ENCODE measurements at regions of chr5 and their contacts with region 1.

Region 1: DNA sequence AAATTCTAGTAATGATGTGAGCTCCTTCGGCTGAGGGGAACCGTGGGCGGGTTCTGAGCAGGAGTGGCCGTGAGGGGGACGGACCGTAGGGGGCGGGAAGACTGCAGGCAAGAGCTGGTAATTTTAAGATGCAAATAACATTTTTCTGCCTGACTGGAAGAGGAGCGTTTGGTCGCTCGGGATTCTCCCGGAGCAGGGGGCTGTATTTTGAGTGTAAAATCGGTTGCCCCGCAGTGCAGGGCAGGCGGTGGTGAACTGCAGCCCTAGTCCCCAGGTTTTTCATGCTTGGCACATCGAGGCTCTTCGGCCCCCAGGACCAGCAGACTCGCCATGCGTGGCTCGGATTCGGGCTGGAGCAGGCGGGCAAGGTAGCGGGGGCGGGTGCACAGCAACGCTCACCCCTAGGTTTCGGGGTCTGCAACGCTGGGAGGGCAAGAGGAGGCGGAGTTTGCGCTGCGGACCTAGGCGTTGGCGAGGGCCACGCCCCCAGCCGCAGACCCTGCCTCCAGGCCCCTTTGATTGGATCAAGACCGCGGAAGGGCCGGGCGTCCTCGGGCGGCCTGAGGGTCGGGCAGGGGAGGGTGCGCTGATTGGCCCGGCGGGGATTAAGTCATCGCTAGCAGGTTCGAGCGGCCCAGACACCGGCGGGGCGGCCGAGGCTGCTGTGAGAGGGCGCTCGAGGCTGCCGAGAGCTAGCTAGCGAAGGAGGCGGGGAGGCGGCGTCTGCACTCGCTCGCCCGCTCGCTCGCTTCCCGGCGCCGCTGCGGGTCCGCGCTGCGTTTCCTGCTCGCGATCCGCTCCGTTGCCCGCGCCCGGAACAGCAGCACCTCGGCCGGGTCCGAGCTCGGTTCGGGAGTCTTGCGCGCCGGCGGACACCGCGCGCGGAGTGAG is at the start of gene ARHGAP26:
- DNase-seq: peak; percentile 98 to 99 (median 99)
- ATAC-seq: peak; percentile 95 to 99 (median 96)
- H3K4me3 ChIP-seq: peak within 1 kb of the TSS; percentile 65 to 99 (median 81)
- H3K27ac ChIP-seq: peak within 1 kb of the TSS; percentile 81 to 94 (median 90)
- H3K4me1 ChIP-seq: peaks cover 5 to 46% (median 28%) of the 10 kb centered on the region in 12 donors
- H3K27me3 ChIP-seq: no peaks in the 10 kb centered on the region
- CTCF ChIP-seq: peak in 9 of 12 donors; percentile 7 to 62 (median 43)
- POLR2A ChIP-seq: peak; percentile 99 to 100
- total RNA-seq, gene ARHGAP26: 22.9 to 52.1 (median 35.6) TPM

Region 2: GRCh38 chr5:142720641-142721271 is 49.2 kb before region 1 on chr5:
- intact Hi-C with region 1: loop called in 5 of 10 experiments (anchors 1 to 5 kb)
- DNase-seq: peak in 3 of 5 donors; percentile 66 to 76 (median 74)
- ATAC-seq: peak in 3 of 4 donors; percentile 14 to 41 (median 14)
- H3K4me3 ChIP-seq: no peak overlapping the region
- H3K27ac ChIP-seq: no peak overlapping the region
- H3K4me1 ChIP-seq: peaks cover 0 to 27% (median 15%) of the 10 kb centered on the region in 12 donors
- H3K27me3 ChIP-seq: no peaks in the 10 kb centered on the region
- CTCF ChIP-seq: peak in 1 of 12 donors; percentile 9
- POLR2A ChIP-seq: no peak

Region 3: GRCh38 chr5:142737179-142737578 is 32.8 kb before region 1 on chr5:
- intact Hi-C with region 1: loop called in 1 of 10 experiments (anchors 5 kb)
- DNase-seq: no peak
- ATAC-seq: no peak
- H3K4me3 ChIP-seq: no peak overlapping the region
- H3K27ac ChIP-seq: no peak overlapping the region
- H3K4me1 ChIP-seq: peaks cover 0 to 42% (median 24%) of the 10 kb centered on the region in 12 donors
- H3K27me3 ChIP-seq: no peaks in the 10 kb centered on the region
- CTCF ChIP-seq: no peak
- POLR2A ChIP-seq: no peak

Region 4: DNA sequence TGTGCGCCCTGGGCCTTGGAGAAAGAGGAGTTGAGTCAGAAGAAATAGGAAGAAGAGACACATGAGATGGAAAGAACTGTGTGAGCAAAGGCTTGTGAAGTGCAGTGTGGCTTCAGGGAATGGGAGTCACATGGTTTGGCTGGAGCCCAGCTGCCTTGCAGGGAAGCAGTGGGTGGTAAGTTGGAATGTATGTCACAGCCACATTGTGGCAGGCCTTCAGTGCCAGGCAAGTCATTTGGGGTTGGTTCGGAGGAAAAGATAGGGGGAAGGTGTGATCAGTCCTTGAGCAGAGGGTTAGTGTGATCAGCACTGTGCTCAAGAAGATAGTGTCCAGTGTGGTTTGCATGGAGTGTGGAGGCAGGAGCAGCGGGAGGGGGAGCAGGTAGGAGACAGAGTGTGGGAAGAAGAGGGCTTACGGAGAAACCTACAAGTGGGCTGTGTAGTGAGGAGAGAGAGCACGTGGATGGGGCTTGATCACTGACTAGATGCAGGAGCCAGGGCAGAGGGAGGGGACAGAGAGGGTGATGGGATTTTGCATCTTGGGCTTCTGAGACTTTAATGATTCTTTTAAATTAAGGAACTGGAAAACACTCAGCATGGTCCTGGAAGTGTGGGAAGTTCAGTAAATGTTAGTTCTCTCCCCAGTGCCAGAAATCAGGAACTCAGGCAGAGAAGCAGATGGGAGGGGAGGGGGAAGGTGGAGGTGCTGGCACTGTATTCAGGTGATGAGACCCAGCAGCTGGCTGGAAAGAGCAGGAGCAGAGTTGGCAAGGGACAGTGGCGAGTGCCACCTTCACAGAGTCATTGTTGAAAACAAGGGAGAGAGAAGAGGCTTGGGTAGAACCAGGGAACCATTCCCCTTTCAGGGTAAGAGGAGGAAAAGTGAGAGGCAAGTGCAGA is 46.8 kb after region 1 on chr5:
- intact Hi-C with region 1: loop called in 6 of 10 experiments (anchors 5 kb)
- DNase-seq: peak in 3 of 5 donors; percentile 68 to 75 (median 75)
- ATAC-seq: peak in 3 of 4 donors; percentile 32 to 55 (median 36)
- H3K4me3 ChIP-seq: no peak overlapping the region
- H3K27ac ChIP-seq: peak overlapping the region in 11 of 12 donors; percentile 7 to 91 (median 50)
- H3K4me1 ChIP-seq: peaks cover 12 to 90% (median 68%) of the 10 kb centered on the region in 12 donors
- H3K27me3 ChIP-seq: no peaks in the 10 kb centered on the region
- CTCF ChIP-seq: no peak
- POLR2A ChIP-seq: no peak

Region 5: DNA sequence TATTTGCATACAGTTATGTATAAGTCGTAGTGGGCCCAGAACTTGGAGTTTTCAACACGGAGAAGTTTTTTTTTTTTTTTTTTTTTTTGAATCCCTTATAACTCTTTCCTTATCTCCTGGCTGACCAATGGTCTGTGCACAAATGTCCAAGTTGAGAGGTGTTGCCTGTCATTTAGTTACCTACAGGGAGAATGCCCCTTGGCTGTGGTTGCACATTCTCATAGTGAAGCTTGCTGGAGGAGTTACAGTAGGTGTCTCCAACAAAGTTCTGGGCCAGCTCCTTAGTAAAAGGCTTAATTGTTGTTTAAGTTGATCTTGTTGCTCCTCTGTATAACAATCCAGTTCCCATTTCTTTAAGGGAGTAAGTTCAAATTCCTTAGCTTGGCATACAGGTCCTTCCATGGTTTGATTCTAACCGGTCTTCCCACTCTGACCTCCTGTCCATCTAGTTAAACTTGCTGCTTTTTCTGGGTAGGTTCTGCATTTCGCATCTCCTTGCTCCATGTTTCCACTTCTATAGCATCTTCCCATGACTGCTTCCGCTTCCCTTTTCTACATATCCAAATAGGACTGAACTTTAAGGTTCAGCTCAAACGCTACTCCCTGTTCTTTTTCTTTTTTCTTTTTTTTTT is 95.5 kb after region 1 on chr5:
- intact Hi-C with region 1: loop called (anchors 2 to 5 kb)
- DNase-seq: no peak
- ATAC-seq: no peak
- H3K4me3 ChIP-seq: no peak overlapping the region
- H3K27ac ChIP-seq: peak overlapping the region in 6 of 12 donors; percentile 2 to 69 (median 44)
- H3K4me1 ChIP-seq: peaks cover 0 to 92% (median 61%) of the 10 kb centered on the region in 12 donors
- H3K27me3 ChIP-seq: no peaks in the 10 kb centered on the region
- CTCF ChIP-seq: no peak
- POLR2A ChIP-seq: no peak

Region 6: GRCh38 chr5:142881076-142881783 is 111.2 kb after region 1 on chr5:
- intact Hi-C with region 1: loop called in 1 of 10 experiments (anchors 5 kb)
- DNase-seq: no peak
- ATAC-seq: peak in 3 of 4 donors; percentile 2 to 46 (median 11)
- H3K4me3 ChIP-seq: no peak overlapping the region
- H3K27ac ChIP-seq: peak overlapping the region in 11 of 12 donors; percentile 24 to 70 (median 58)
- H3K4me1 ChIP-seq: peaks cover 6 to 67% (median 37%) of the 10 kb centered on the region in 12 donors
- H3K27me3 ChIP-seq: no peaks in the 10 kb centered on the region
- CTCF ChIP-seq: no peak
- POLR2A ChIP-seq: no peak

Region 7: GRCh38 chr5:143386725-143387124 is 616.7 kb after region 1 on chr5:
- intact Hi-C with region 1: no loop called
- DNase-seq: no peak
- ATAC-seq: no peak
- H3K4me3 ChIP-seq: no peak overlapping the region
- H3K27ac ChIP-seq: no peak overlapping the region
- H3K4me1 ChIP-seq: peaks cover 0 to 57% (median 42%) of the 10 kb centered on the region in 12 donors
- H3K27me3 ChIP-seq: no peaks in the 10 kb centered on the region
- CTCF ChIP-seq: no peak
- POLR2A ChIP-seq: no peak